Thyroid gland (tissue), 4 donors: ENCODE measurements at regions of chr1 and their contacts with region 1.

Region 1: GRCh38 chr1:2233997-2234761 is 6.1 kb downstream of the SKI start:
- DNase-seq: peak; percentile 82 to 87
- H3K4me3 ChIP-seq: peak overlapping the region in 1 of 3 donors; percentile 23
- H3K27ac ChIP-seq: peak overlapping the region; percentile 75 to 84 (median 78)
- H3K4me1 ChIP-seq: peaks cover 96 to 98% of the 10 kb centered on the region in 2 donors
- H3K27me3 ChIP-seq: no peaks in the 10 kb centered on the region
- CTCF ChIP-seq: no peak
- POLR2A ChIP-seq: no peak

Region 2: GRCh38 chr1:2270260-2271100 is 36.3 kb after region 1 on chr1:
- intact Hi-C with region 1: loop called (anchors 5 kb)
- DNase-seq: no peak
- H3K4me3 ChIP-seq: no peak overlapping the region
- H3K27ac ChIP-seq: peak overlapping the region in 2 of 3 donors; percentile 2 to 18
- H3K4me1 ChIP-seq: peaks cover 65 to 94% of the 10 kb centered on the region in 2 donors
- H3K27me3 ChIP-seq: no peaks in the 10 kb centered on the region
- CTCF ChIP-seq: no peak
- POLR2A ChIP-seq: no peak

Region 3: GRCh38 chr1:2345223-2346080 is 111.3 kb after region 1 on chr1:
- intact Hi-C with region 1: no loop called
- DNase-seq: no peak
- H3K4me3 ChIP-seq: no peak overlapping the region
- H3K27ac ChIP-seq: no peak overlapping the region
- H3K4me1 ChIP-seq: no peaks in the 10 kb centered on the region
- H3K27me3 ChIP-seq: no peaks in the 10 kb centered on the region
- CTCF ChIP-seq: no peak
- POLR2A ChIP-seq: no peak